ENCODE measurements at regions of chr9 and their contacts with region 1.

Region 1: GRCh38 chr9:74496819-74497747 is at the start of gene RORB:
- DNase-seq: peak in 2 of 9 donors; percentile 34 to 50
- ATAC-seq: peak; percentile 52
- H3K4me3 ChIP-seq: peak within 1 kb of the TSS; percentile 53
- H3K4me3 Mint-ChIP-seq: peak within 1 kb of the TSS; percentile 80 to 95 (median 88)
- H3K27ac ChIP-seq: no peak within 1 kb of the TSS
- H3K27ac Mint-ChIP-seq: peak within 1 kb of the TSS in 4 of 9 donors; percentile 30 to 75 (median 52)
- H3K4me1 ChIP-seq: no peaks in the 10 kb centered on the region
- H3K4me1 Mint-ChIP-seq: peaks cover 11 to 39% (median 33%) of the 10 kb centered on the region in 7 donors
- H3K27me3 ChIP-seq: peaks cover 0 to 8% of the 10 kb centered on the region in 2 donors
- H3K27me3 Mint-ChIP-seq: peaks cover 65 to 81% (median 66%) of the 10 kb centered on the region in 5 donors
- total RNA-seq, gene RORB: 0.12 TPM in 1 of 5 experiments, not detected in the others

Region 2: DNA sequence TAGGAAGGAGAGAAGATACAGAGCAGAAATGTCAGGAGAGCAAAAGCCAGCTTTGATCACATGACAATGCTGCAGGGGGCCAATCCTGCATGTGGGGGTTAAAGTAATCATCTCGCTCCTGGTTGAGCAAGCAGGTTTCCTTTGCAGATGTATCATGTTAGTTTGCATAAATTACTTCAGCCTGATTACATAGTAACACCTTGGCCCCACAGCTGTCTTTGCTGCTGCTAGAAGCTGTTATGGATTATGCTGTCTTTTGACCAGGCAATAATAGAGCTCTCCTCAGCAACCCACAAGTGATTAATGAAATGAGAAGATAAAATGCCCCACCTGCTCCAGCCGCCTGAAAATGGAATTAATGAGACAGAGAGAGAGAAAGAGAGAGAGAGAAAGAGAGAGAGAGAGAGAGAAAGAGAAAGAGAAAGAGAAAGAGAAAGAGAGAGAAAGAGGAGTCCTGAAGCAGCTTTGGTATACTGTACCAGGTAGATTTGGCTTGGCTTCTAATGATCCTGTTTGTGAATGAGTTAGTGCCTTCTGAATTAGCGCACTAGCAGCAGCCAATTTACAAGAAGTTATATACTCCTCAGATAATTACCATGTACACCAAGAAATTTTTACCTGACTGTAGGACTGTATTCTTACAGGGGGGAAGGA is 174.3 kb before region 1 on chr9:
- CTCF ChIA-PET with region 1: no interaction called
- POLR2A ChIA-PET with region 1: no interaction called
- intact Hi-C with region 1: loop called in 1 of 2 experiments (anchors 10 kb)
- DNase-seq: no peak
- ATAC-seq: no peak
- H3K4me3 ChIP-seq: no peak overlapping the region
- H3K4me3 Mint-ChIP-seq: peak overlapping the region in 2 of 10 donors; percentile 36 to 76
- H3K27ac ChIP-seq: no peak overlapping the region
- H3K27ac Mint-ChIP-seq: peak overlapping the region in 2 of 9 donors; percentile 26 to 81
- H3K4me1 ChIP-seq: no peaks in the 10 kb centered on the region
- H3K4me1 Mint-ChIP-seq: peaks cover 0 to 10% (median 0%) of the 10 kb centered on the region in 7 donors
- H3K27me3 ChIP-seq: no peaks in the 10 kb centered on the region
- H3K27me3 Mint-ChIP-seq: peaks cover 0 to 9% (median 0%) of the 10 kb centered on the region in 5 donors

Region 3: DNA sequence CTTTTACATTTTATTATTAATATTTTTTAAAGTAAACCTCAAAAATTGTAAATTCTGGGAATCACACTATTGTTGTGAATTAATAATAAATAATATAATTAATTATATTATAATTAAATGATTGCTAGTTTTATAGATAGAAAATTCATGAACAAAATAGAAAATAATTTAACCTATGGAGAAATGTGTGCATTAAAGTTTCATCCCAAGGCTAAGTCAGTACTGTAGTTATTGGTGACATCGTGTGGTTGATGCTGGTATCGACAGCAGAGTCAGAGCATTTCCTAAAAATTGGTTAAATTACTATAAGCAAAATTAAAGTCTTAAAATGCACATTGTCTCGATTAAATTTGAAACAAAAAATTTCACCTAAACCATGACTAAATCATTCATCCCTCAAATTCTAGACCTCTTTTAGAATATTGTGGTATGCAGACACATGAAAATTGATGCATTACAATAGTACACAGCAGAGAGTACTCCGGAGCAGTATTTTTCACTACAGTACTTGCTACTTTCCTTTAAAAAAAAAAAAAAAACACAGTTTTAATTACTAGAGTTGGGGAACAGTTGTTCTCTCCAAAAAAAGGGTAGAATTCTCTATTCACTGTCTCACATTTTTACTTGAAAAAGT is 73.9 kb after region 1 on chr9:
- CTCF ChIA-PET with region 1: no interaction called
- POLR2A ChIA-PET with region 1: no interaction called
- intact Hi-C with region 1: no loop called
- DNase-seq: peak in 1 of 9 donors; percentile 2
- ATAC-seq: no peak
- H3K4me3 ChIP-seq: no peak overlapping the region
- H3K4me3 Mint-ChIP-seq: no peak overlapping the region
- H3K27ac ChIP-seq: no peak overlapping the region
- H3K27ac Mint-ChIP-seq: no peak overlapping the region
- H3K4me1 ChIP-seq: no peaks in the 10 kb centered on the region
- H3K4me1 Mint-ChIP-seq: no peaks in the 10 kb centered on the region
- H3K27me3 ChIP-seq: no peaks in the 10 kb centered on the region
- H3K27me3 Mint-ChIP-seq: no peaks in the 10 kb centered on the region